Activated T-helper 1 cell treated with anti-CD3 and anti-CD28 coated beads, Interleukin-12 subunit alpha, Interleukin-12 subunit beta, Interleukin-2, Interleukin-4 antibody, amounts not matched to agents 30 ng/mL and 10 ng/mL and 1 ng/mL, durations not matched to agents 14 hours and 24 hours and 36 hours (primary cell): ENCODE measurements at regions of chr11 and their contacts with region 1.

Region 1: DNA sequence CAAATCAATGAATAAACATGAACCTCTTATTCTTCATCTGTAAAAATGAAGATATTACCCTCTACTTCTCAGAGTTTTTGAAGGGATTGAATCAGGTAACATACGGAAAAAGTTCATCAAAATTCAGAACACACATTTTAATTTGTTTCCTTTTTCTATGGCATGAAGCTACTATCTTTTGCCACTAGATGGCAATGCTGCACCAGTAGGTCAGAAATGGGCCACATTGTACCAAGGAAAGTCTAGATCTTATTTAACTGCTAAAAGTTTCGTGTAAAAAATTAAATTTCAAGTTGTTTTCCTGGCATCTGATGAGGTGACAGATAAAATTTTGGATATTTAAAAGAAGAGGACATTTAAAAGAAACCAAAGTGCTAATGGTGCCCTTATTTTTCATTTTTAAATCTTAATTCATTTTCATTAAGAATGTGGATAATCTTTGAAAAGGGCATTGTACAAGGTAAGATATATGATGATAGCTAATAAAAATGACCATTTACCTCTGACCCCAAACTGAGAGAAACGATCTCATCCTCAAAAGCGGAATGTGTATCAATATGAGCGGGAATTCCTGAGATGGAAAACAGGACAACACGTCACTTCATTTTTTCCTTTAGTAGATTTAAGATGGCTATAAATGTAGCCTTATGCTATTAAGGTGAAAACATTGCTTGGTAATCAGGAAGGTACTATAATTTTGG is 16.1 kb downstream of the ALKBH8 start:
- DNase-seq: no peak
- H3K4me3 Mint-ChIP-seq: no peak overlapping the region
- H3K27ac Mint-ChIP-seq: no peak overlapping the region
- H3K4me1 Mint-ChIP-seq: peaks cover 3% of the 10 kb centered on the region
- H3K27me3 Mint-ChIP-seq: no peaks in the 10 kb centered on the region

Region 2: DNA sequence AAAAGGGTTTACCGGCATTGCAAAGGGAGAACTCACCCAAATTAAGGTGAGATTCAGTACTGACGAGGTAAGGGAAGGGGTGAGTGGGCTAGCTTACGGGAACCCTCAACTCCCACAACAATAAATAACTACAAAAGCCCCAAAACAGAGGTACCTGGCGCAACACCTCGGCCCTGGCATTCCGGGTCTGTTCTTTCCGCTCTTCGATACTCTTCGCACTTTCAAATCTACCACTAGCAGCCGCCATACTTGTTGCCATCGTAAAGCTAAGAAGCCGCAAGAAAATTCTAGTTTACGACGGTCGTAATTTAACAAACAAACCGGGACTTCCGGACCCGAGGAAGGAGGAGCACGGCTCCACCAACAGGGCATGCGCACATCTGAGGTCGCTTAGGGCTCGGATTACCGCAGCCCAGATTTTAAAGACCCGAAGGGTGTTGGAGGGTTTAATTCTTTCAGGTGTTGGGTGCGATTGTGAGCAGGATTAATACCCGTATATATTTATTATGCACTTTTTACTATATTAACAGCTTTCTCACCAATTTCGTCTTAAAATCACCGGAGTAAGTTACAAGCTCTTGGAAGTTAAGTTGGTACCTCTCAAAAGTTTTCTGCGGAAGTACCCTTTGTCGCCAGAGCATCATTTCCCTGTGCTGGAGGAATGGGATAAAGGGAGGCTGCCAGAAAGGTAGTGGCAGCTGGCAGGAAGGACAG is 91.7 kb before region 1 on chr11 and contains the start of gene CWF19L2:
- intact Hi-C with region 1: loop called (anchors 5 kb)
- DNase-seq: peak; percentile 88
- H3K4me3 Mint-ChIP-seq: peak within 1 kb of the TSS; percentile 91
- H3K27ac Mint-ChIP-seq: peak within 1 kb of the TSS; percentile 87
- H3K4me1 Mint-ChIP-seq: peaks cover 28% of the 10 kb centered on the region
- H3K27me3 Mint-ChIP-seq: peaks cover 9% of the 10 kb centered on the region
- total RNA-seq, gene CWF19L2: 16.5 and 16.7 TPM in 2 replicates

Region 3: GRCh38 chr11:107505647-107506225 is 43.7 kb before region 1 on chr11:
- intact Hi-C with region 1: no loop called
- DNase-seq: no peak
- H3K4me3 Mint-ChIP-seq: no peak overlapping the region
- H3K27ac Mint-ChIP-seq: no peak overlapping the region
- H3K4me1 Mint-ChIP-seq: no peaks in the 10 kb centered on the region
- H3K27me3 Mint-ChIP-seq: no peaks in the 10 kb centered on the region

Region 4: DNA sequence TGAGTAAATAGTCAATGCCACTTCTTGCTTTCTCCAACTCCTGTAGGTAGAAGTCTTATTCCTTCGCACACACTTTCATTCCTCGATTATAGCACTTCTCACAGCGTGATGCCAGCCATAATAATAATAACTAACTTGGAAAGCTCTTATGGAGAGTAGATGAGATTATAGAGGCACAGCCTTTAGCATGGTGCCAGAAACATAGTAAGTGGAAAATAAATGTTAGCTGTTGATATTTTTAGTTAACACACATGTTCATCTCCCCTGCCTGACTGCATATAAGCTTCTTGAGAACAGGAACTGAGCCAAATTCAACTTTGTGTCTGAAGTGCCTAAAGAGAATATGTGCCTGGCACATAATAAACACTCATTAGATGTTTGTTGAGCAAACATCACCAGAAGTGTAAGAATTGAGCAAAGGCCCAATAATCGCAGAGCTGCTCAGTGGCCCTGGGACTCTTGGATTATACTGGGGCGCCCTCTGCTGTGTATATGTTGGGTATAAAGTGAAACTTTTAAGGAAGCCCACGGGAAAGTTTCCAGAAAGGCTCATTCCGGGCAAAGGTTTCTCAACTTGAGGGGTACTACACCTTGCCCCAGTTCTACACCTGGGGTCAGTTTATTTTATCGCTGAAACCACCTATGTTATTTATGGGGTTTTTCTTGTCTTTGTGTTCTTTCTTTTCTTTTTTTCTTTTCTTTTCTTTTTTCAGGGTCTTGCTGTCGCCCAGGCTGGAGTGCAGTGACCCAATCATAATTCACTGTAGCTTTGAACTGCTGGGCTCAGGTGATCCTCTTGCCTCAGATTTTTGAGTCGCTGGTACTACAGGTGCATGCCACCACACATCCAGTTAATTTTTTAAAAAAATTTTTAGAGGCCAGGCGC is 140.2 kb after region 1 on chr11:
- intact Hi-C with region 1: loop called (anchors 1 kb)
- DNase-seq: peak; percentile 33
- H3K4me3 Mint-ChIP-seq: no peak overlapping the region
- H3K27ac Mint-ChIP-seq: no peak overlapping the region
- H3K4me1 Mint-ChIP-seq: no peaks in the 10 kb centered on the region
- H3K27me3 Mint-ChIP-seq: peaks cover 10% of the 10 kb centered on the region